ENCODE measurements at regions of chr2 and their contacts with region 1.

Region 1: DNA sequence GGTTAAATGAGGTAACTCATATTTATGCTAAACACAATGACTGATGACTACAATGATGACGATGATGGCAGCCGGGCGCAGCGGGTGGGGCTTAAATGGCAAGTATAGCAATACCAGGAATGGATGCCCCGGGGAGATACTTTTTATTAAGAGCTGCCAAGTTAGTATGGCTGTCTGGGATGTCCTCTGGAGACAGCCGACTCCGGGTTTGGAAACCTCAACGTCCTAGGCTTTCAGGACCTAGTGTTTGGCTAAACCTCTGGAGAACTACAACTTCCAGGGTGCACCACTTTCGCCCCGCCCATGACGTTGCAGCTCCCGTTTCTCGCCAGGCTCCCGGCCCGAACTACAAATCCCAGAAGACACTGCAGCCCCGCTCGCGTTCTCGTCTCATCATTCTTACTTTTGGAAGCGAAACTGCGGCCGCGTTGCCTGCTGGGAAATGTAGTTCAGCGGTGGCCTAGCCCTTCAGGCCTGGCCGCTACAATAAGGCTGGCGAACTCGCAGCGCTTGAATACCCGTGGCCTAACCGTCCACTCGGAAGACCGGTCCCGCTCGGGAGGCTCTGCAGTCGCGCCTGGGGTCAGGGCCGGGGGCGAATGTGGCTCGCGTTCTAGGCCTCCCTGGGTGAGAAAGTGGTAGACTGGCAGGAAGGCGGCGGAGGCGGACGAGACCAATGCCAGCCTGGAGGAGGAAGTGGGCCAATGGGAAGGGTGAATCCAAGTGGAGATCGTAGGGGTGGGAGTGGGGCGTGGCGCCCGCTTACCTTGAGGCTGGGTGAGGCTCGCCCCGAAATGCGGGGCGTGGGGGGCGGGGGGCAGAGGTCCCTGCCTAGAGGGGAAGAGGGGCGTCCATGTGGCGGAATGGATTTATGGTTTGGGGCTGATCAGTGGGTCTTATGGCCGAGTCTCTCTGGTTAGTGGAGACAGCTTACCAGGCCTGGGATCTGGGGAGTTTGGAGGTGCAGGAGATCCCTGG is at the start of gene SMARCAL1:
- DNase-seq: peak; percentile 96 to 97 (median 97)
- H3K4me3 ChIP-seq: peak within 1 kb of the TSS; percentile 74 to 99 (median 74)
- H3K4me3 Mint-ChIP-seq: peak within 1 kb of the TSS; percentile 89 to 94
- H3K27ac ChIP-seq: peak within 1 kb of the TSS; percentile 71 to 94
- H3K27ac Mint-ChIP-seq: peak within 1 kb of the TSS; percentile 89 to 97 (median 94)
- H3K4me1 ChIP-seq: peaks cover 11 to 13% of the 10 kb centered on the region in 2 donors
- H3K4me1 Mint-ChIP-seq: peaks cover 17% of the 10 kb centered on the region
- H3K27me3 ChIP-seq: no peaks in the 10 kb centered on the region
- H3K27me3 Mint-ChIP-seq: peaks cover 0 to 9% (median 0%) of the 10 kb centered on the region in 3 donors
- CTCF ChIP-seq: no peak
- polyA plus RNA-seq, gene SMARCAL1: 10.5 to 13.3 (median 11.5) TPM

Region 2: GRCh38 chr2:216114714-216115557 is 297.4 kb before region 1 on chr2:
- intact Hi-C with region 1: loop called (anchors 5 to 10 kb)
- DNase-seq: peak; percentile 98 to 100 (median 99)
- H3K4me3 ChIP-seq: peak overlapping the region; percentile 68 to 86 (median 82)
- H3K4me3 Mint-ChIP-seq: peak overlapping the region; percentile 84 to 96
- H3K27ac ChIP-seq: peak overlapping the region; percentile 80 to 97
- H3K27ac Mint-ChIP-seq: peak overlapping the region; percentile 96 to 100 (median 99)
- H3K4me1 ChIP-seq: peaks cover 22 to 40% of the 10 kb centered on the region in 2 donors
- H3K4me1 Mint-ChIP-seq: peaks cover 35% of the 10 kb centered on the region
- H3K27me3 ChIP-seq: no peaks in the 10 kb centered on the region
- H3K27me3 Mint-ChIP-seq: no peaks in the 10 kb centered on the region
- CTCF ChIP-seq: peak; percentile 93

Region 3: GRCh38 chr2:216498418-216499413 is 86.4 kb after region 1 on chr2 and contains the start of gene RPL37A:
- intact Hi-C with region 1: loop called (anchors 1 to 5 kb)
- DNase-seq: peak; percentile 91 to 94 (median 91)
- H3K4me3 ChIP-seq: peak within 1 kb of the TSS; percentile 81 to 97 (median 88)
- H3K4me3 Mint-ChIP-seq: peak within 1 kb of the TSS; percentile 95 to 96
- H3K27ac ChIP-seq: peak within 1 kb of the TSS; percentile 79 to 90
- H3K27ac Mint-ChIP-seq: peak within 1 kb of the TSS; percentile 93 to 97 (median 94)
- H3K4me1 ChIP-seq: peaks cover 50 to 59% of the 10 kb centered on the region in 2 donors
- H3K4me1 Mint-ChIP-seq: peaks cover 56% of the 10 kb centered on the region
- H3K27me3 ChIP-seq: no peaks in the 10 kb centered on the region
- H3K27me3 Mint-ChIP-seq: no peaks in the 10 kb centered on the region
- CTCF ChIP-seq: no peak
- polyA plus RNA-seq, gene RPL37A: 1,504 to 1,660 (median 1,597) TPM

Measured in CD14-positive monocyte (primary cell).